A673 (cell line): ENCODE measurements at regions of chr1 and their contacts with region 1.

Region 1: DNA sequence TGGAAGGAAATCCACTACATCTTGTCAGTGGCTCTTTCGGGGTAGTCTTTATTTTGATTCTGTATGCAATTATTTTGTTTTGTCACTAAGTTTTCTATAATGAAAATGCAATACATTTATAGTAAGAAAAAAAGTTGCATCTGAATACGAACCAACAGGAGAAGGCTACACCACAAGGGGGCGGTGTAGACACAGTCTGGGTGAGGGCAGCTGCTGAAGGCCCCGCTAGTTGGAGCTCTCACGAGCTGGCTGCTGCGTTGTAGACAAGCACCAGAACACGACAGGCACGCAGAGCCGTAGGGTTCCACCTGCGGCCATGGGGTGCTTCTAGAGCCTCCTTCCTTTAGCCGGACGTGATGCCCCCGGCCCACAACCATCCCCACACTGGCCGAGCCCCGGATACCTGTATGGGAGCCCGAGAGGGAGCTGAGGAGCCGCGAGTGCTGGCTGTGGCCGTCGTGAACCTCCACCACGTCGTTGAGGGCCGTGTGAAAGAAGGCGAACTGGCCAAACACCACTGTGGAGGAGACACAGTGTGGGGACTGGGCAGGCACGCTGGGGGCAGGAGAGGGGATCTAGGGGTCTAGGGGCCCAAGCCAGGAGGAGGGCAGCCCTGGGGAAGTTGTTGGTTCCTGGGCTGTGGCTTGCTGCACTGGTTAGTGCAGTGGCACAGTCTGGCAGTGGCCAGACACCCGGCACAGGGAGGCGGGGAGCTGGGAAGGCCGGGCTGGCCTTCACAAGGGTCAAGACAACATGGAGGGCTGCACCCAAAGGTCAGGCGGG is 160.8 kb downstream of the ZSCAN20 start:
- DNase-seq: peak; percentile 92
- H3K4me3 ChIP-seq: no peak overlapping the region
- H3K27ac ChIP-seq: no peak overlapping the region
- H3K4me1 ChIP-seq: no peaks in the 10 kb centered on the region
- H3K27me3 ChIP-seq: peaks cover 6% of the 10 kb centered on the region
- CTCF ChIP-seq: peak; percentile 99

Region 2: GRCh38 chr1:33280091-33280661 is 353.0 kb before region 1 on chr1:
- CTCF ChIA-PET with region 1: no interaction called
- POLR2A ChIA-PET with region 1: no interaction called
- intact Hi-C with region 1: no loop called
- DNase-seq: no peak
- H3K4me3 ChIP-seq: no peak overlapping the region
- H3K27ac ChIP-seq: no peak overlapping the region
- H3K4me1 ChIP-seq: peaks cover 11% of the 10 kb centered on the region
- H3K27me3 ChIP-seq: no peaks in the 10 kb centered on the region
- CTCF ChIP-seq: no peak

Region 3: DNA sequence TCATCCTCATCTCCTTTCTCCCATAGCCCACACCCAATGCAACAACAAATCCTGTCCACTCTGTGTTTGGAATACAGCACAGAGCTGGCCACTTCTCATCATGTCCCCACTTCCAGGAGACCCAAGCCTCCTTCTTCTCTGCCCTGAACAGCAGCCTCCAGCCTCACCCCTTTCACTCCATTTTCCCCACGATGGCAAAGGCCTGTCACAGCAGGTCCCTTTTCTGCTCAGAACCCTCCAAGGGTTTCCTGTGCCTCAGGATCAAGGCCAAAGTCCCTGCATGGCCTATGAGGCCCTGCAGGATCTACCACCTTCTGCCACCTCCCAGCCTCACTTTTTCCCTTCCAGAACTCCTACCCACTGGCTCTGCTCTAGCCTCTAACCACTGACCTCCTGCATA is 453.4 kb after region 1 on chr1:
- CTCF ChIA-PET with region 1: no interaction called
- POLR2A ChIA-PET with region 1: interaction called, 14 read pairs
- intact Hi-C with region 1: no loop called
- DNase-seq: no peak
- H3K4me3 ChIP-seq: no peak overlapping the region
- H3K27ac ChIP-seq: no peak overlapping the region
- H3K4me1 ChIP-seq: no peaks in the 10 kb centered on the region
- H3K27me3 ChIP-seq: no peaks in the 10 kb centered on the region
- CTCF ChIP-seq: no peak

Region 4: GRCh38 chr1:34162852-34163766 is 529.9 kb after region 1 on chr1:
- CTCF ChIA-PET with region 1: interaction called, 6 read pairs
- POLR2A ChIA-PET with region 1: no interaction called
- intact Hi-C with region 1: loop called (anchors 2 kb)
- DNase-seq: peak; percentile 85
- H3K4me3 ChIP-seq: peak overlapping the region; percentile 49
- H3K27ac ChIP-seq: no peak overlapping the region
- H3K4me1 ChIP-seq: peaks cover 10% of the 10 kb centered on the region
- H3K27me3 ChIP-seq: peaks cover 63% of the 10 kb centered on the region
- CTCF ChIP-seq: peak; percentile 78

Region 5: GRCh38 chr1:34597877-34598514 is 964.8 kb after region 1 on chr1:
- CTCF ChIA-PET with region 1: interaction called, 3 read pairs
- POLR2A ChIA-PET with region 1: no interaction called
- intact Hi-C with region 1: loop called (anchors 2 kb)
- DNase-seq: peak; percentile 73
- H3K4me3 ChIP-seq: no peak overlapping the region
- H3K27ac ChIP-seq: no peak overlapping the region
- H3K4me1 ChIP-seq: no peaks in the 10 kb centered on the region
- H3K27me3 ChIP-seq: no peaks in the 10 kb centered on the region
- CTCF ChIP-seq: peak; percentile 90

Region 6: DNA sequence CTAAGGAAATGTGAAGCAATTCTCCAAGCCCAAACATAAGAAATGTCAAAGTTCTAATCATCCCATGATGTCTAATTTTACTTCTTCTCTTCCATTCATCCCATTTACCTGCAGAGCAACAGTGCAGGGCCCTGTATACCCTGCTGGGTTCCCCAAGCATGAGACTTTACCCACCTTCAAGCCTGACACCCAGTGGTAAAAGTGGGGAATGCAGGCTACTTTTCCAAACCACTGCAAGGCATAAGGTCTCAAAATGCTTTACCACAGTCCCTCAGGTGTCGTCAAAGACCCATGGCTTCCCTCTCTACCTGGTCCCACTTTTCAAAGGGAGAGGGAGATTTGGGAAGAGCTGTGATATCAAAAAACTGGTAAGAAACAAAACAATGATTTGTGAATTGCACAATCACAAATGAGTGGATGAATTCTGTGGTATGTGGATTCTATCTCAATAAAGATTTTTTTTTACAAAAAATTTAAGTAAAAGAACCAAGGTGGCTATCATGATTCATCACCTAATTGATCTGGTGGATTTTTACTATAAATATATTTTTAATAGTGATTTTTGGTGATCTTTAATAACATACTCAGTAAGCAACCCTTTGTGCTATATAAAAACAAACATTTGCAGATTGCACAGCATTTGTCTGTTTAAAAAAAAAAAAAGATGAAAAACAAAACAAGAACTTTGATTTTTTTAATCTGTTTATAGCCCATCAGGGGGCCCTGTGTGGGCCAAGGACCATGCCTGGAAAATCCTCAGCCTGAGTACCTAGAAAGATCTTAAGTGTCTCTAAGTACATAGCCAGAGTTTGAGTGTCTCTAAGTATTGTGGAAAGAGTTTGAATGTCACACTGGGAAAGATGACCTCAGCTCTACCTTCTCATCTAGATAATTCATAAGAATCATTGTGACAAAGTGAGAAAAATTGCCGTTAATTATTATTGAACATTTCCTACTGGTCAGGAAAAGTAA is 1048.6 kb after region 1 on chr1:
- CTCF ChIA-PET with region 1: no interaction called
- POLR2A ChIA-PET with region 1: no interaction called
- intact Hi-C with region 1: loop called (anchors 10 kb)
- DNase-seq: peak; percentile 58
- H3K4me3 ChIP-seq: no peak overlapping the region
- H3K27ac ChIP-seq: no peak overlapping the region
- H3K4me1 ChIP-seq: no peaks in the 10 kb centered on the region
- H3K27me3 ChIP-seq: no peaks in the 10 kb centered on the region
- CTCF ChIP-seq: peak; percentile 82

Region 7: GRCh38 chr1:34742667-34743270 is 1109.6 kb after region 1 on chr1:
- CTCF ChIA-PET with region 1: interaction called, 10 read pairs
- POLR2A ChIA-PET with region 1: no interaction called
- intact Hi-C with region 1: loop called (anchors 5 kb)
- DNase-seq: peak; percentile 78
- H3K4me3 ChIP-seq: no peak overlapping the region
- H3K27ac ChIP-seq: no peak overlapping the region
- H3K4me1 ChIP-seq: no peaks in the 10 kb centered on the region
- H3K27me3 ChIP-seq: no peaks in the 10 kb centered on the region
- CTCF ChIP-seq: peak; percentile 96